Gastrocnemius medialis (tissue), 4 donors: ENCODE measurements at regions of chr9 and their contacts with region 1.

Region 1: DNA sequence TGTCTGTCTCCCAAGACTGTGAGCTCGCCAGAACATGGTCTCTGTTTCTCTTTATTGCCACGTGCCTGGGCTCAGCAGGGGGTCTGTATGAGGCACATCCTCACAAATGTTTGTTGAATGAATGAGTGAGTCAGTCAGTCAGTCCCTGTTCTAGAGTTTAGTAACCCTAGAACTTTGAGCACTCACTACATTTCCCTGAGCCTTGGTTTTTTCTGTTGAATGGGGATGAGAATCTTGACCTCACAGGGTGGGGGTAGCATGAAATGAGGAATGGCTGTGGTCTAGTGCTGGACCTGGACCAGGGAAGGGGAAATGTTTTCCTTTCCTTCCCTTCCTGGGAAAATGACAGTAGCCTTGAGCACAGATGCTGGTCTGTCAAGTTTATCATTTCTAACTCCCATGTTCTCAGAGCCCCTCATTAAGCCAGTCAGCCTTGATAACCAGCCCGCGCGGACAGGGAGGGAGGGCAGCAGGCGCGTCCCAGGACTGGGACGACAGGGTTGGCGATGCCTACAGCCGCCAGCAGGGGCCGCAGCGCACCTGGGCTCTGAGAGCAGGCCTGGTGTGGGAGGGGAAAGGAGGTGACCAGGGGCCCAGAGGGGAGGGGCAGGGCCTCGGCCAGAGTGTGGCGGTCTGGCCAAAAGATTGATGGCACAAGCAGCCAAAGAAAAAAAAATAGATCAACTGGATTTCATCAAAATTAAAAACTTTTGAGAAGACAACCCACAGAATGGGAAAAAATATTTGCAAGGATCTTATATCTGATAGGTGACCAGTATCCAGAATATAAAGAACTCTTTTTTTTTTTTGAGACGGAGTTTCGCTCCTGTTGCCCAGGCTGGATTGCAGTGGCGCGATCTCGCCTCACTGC is 24.1 kb upstream of the WNK2 start:
- DNase-seq: peak; percentile 75 to 81
- ATAC-seq: peak; percentile 88 to 94
- H3K4me3 ChIP-seq: peak overlapping the region in 1 of 4 donors; percentile 11
- H3K27ac ChIP-seq: no peak overlapping the region
- H3K4me1 ChIP-seq: peaks cover 3 to 18% of the 10 kb centered on the region in 2 donors
- H3K27me3 ChIP-seq: no peaks in the 10 kb centered on the region
- CTCF ChIP-seq: peak; percentile 96 to 99 (median 97)
- POLR2A ChIP-seq: no peak

Region 2: GRCh38 chr9:93095205-93096130 is 64.4 kb before region 1 on chr9:
- in situ Hi-C with region 1: no loop called
- intact Hi-C with region 1: no loop called
- DNase-seq: peak; percentile 99 to 100
- ATAC-seq: peak; percentile 57 to 64
- H3K4me3 ChIP-seq: peak overlapping the region; percentile 67 to 96 (median 86)
- H3K27ac ChIP-seq: peak overlapping the region; percentile 91 to 100 (median 100)
- H3K4me1 ChIP-seq: peaks cover 35 to 43% of the 10 kb centered on the region in 2 donors
- H3K27me3 ChIP-seq: no peaks in the 10 kb centered on the region
- CTCF ChIP-seq: no peak
- POLR2A ChIP-seq: peak; percentile 80 to 88

Region 3: GRCh38 chr9:93183609-93184431 is 24.0 kb after region 1 on chr9 and contains the start of gene WNK2:
- in situ Hi-C with region 1: no loop called
- intact Hi-C with region 1: loop called (anchors 2 kb)
- DNase-seq: no peak
- ATAC-seq: peak; percentile 68 to 69
- H3K4me3 ChIP-seq: peak within 1 kb of the TSS; percentile 60 to 72 (median 68)
- H3K27ac ChIP-seq: peak within 1 kb of the TSS; percentile 71 to 86 (median 82)
- H3K4me1 ChIP-seq: peaks cover 38% of the 10 kb centered on the region in 2 donors
- H3K27me3 ChIP-seq: no peaks in the 10 kb centered on the region
- CTCF ChIP-seq: peak in 1 of 5 experiments; percentile 8
- POLR2A ChIP-seq: peak; percentile 80 to 84
- total RNA-seq, gene WNK2: 11.3 to 43.0 (median 24.7) TPM

Region 4: DNA sequence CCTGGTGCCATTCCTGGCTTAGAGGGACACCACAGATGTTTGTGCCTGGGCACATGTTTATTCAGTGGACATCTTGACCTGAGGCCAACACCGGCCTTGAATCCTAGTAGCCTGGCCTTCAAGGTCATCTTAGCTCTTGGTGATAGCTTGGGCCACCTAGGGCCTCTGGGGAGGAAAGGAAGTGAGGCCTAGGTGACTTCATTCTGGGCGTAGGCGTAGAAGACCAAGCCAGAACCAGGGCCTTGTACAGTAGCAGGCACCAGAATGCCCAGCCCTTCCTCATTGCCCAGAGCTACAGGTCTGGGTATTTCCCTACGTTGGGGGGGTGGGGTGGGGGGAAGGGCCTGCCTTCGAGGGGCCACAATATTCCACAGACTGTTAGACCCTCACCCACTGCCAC is 57.9 kb after region 1 on chr9:
- in situ Hi-C with region 1: no loop called
- intact Hi-C with region 1: loop called (anchors 1 kb)
- DNase-seq: peak; percentile 67 to 89
- ATAC-seq: peak; percentile 62 to 66
- H3K4me3 ChIP-seq: no peak overlapping the region
- H3K27ac ChIP-seq: peak overlapping the region; percentile 97 to 99 (median 98)
- H3K4me1 ChIP-seq: peaks cover 46 to 49% of the 10 kb centered on the region in 2 donors
- H3K27me3 ChIP-seq: no peaks in the 10 kb centered on the region
- CTCF ChIP-seq: no peak
- POLR2A ChIP-seq: no peak

Region 5: DNA sequence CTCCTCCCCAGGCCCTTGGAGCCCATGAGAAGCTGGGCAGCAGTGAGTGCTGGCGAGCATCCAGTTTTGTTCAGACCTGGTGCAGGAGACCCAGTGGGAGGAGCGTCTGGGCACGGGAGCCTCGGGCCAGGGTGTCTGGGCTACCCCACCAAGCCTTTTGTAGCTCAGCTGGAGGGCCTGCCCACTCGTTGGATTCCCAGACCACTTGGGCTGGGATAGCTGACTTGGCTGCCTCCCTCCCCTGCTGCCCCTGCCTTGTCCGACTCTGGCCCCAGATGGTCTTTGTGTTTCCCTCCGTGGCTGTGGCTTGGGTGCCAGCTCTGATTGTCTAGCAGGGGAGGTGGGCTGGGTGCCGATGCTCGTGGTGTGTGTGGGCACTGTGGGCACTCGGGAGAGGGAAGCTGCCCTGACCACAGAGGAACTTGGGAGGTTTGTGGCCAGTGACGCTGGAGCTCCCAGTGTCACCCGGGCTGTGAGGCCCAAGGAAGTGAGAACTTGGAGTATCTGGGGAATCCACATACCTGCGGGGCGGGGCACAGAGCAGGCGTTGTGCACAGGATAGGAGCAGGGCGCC is 71.4 kb after region 1 on chr9:
- in situ Hi-C with region 1: no loop called
- intact Hi-C with region 1: no loop called
- DNase-seq: no peak
- ATAC-seq: no peak
- H3K4me3 ChIP-seq: no peak overlapping the region
- H3K27ac ChIP-seq: no peak overlapping the region
- H3K4me1 ChIP-seq: peaks cover 13 to 17% of the 10 kb centered on the region in 2 donors
- H3K27me3 ChIP-seq: no peaks in the 10 kb centered on the region
- CTCF ChIP-seq: no peak
- POLR2A ChIP-seq: no peak

Region 6: DNA sequence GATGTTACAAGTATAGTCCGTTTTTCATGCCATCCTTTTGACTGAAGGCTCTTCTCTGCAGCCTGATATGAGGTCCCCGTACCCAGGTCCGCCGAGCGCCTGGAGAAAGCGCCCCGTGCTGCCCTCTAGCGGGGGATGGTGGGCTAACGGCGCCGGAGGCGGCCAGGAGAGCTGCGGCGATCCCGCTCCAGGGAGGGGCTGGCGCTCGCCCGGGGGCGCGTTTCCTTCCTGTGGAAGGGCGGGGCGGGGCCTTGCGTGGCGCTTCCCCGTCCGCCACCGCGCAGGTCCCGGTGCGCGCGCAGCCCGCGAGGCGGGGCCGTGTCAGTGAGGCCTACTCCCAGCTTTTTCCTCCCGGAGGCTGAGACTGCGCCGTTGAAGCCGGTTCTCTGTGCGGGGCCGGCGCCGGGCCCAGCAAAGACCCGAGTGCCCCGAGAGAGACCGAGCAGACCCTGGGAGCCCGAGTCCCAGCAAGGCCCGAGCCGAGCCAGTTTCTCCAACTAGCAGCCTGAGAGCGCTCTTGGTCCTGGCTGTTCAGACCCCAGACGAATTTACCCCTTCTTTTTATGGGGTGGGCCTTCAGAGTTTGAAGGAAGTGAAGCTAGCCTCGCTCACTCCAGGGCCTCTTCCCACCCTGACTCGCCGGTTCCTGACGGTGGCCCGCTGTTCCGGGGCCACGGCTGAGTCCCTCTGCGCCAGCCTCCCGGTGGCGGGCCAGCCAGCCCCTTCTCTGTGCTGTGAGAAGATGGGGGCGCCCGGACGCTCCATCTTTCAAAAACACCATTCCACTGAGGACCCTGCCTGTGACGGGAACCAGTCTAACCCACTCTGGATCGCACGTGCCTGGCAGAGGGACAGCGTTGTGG is 406.8 kb after region 1 on chr9:
- in situ Hi-C with region 1: loop called in 3 of 4 experiments (anchors 25 kb)
- intact Hi-C with region 1: no loop called
- DNase-seq: peak; percentile 95 to 97
- ATAC-seq: peak; percentile 93 to 94
- H3K4me3 ChIP-seq: peak overlapping the region; percentile 64 to 88 (median 72)
- H3K27ac ChIP-seq: peak overlapping the region; percentile 89 to 99 (median 94)
- H3K4me1 ChIP-seq: peaks cover 10 to 13% of the 10 kb centered on the region in 2 donors
- H3K27me3 ChIP-seq: no peaks in the 10 kb centered on the region
- CTCF ChIP-seq: peak; percentile 92 to 98 (median 95)
- POLR2A ChIP-seq: peak; percentile 83 to 89